ENCODE measurements at regions of chr16 and their contacts with region 1.

Region 1: GRCh38 chr16:69031877-69032301 is 73.6 kb upstream of the HAS3 start:
- DNase-seq: no peak
- H3K4me3 ChIP-seq: no peak overlapping the region
- CTCF ChIP-seq: no peak

Region 2: DNA sequence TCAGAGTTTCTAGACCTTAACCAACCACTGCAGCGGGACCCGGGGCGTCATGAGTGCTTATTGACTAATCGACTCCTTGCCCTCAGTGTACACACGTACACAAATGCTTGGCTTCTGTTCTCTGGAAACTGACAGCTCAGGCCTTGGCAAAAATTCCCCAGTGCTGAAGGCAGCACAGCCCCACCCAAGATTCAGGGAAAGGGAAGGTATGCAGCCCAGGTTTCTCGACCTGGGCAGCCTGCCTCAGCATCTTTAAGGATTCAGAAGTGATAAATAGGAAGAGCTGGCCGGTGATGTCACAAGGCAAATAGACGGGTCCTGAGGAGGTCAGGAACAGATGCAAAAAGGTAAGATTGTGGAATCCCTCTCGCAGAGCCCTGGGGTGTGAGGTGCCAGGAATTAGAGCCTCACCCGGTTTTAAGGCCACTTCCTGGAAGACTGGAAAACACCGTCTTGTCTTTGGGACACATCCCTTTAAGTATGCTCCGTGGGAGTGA is 395.8 kb before region 1 on chr16:
- in situ Hi-C with region 1: no loop called
- DNase-seq: no peak
- H3K4me3 ChIP-seq: no peak overlapping the region
- CTCF ChIP-seq: no peak

Region 3: DNA sequence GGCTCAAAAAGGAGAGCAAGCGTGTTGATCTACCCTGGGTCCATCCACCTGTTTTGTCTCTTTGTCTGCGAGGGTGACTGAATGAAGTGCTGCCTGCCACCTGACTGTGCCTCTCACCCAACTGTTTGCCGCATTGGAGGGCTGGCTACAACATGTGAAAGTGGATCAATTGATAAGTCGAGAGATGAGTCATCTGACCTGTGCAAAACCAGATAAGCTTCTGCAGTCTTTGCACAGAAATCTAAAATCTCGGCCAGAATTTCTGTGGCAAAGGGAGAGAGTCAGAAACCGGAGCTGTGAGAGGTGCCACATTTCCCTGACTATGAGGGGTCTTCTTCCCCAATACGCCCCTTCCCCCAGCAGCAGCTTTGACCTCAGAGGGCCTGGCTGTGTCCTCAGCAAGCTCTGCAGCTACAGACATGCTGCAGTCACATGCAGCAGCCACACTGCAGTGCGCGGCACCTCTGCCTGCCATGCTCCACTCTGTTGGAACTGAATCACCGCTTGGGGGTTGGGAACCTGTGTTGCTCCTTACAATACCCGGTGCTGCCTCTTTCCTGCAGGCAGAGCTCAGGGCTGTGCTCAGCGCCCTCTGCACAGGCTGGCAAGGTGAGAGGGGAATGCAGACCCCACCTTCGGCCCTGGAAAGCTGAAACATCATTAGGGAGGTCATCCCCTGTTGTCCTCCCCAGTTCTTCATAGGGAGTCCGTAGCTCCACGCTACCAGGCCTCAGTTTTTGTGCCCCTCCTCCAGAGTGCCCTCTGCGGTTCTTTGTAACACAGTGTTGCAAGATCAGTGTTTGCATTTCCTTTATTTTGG is 57.4 kb after region 1 on chr16:
- in situ Hi-C with region 1: loop called (anchors 5 kb)
- DNase-seq: no peak
- H3K4me3 ChIP-seq: no peak overlapping the region
- CTCF ChIP-seq: no peak

Measured in astrocyte of the cerebellum (primary cell).